Ascending aorta (tissue), 2 donors: ENCODE measurements at regions of chr7 and their contacts with region 1.

Region 1: DNA sequence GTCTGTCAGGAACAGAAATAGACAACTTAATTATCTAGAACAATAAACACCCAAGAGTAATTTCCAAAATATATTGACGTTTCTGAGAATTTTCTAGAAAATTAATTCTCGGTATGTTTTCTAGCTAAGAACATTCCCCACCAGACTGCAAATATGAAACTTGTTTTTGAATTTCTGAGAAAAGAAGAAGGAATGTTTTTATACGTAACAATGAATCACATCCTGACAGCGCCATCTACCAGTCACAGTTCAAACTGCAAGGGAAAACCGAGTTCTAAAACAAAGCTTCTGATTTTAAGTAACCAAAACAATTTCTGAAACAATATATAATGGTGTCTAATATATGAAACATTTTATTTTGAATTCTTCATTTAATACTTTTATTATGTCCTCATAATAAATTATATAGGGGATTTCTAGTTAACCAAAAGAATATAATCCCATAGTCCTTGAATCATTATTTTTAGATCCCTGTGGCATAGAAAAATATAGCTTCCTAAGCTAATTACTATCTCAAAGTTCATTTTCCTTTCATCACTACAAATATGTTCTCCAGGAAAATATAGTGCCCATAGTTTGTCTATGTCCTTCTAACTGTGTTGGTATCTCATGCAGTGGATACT is 34.5 kb upstream of the MEOX2 start:
- DNase-seq: peak in 1 of 2 donors; percentile 74
- H3K4me3 ChIP-seq: no peak overlapping the region
- H3K27ac ChIP-seq: peak overlapping the region; percentile 23 to 27
- H3K4me1 ChIP-seq: no peaks in the 10 kb centered on the region
- H3K27me3 ChIP-seq: no peaks in the 10 kb centered on the region
- CTCF ChIP-seq: peak; percentile 43 to 65 (median 55)

Region 2: DNA sequence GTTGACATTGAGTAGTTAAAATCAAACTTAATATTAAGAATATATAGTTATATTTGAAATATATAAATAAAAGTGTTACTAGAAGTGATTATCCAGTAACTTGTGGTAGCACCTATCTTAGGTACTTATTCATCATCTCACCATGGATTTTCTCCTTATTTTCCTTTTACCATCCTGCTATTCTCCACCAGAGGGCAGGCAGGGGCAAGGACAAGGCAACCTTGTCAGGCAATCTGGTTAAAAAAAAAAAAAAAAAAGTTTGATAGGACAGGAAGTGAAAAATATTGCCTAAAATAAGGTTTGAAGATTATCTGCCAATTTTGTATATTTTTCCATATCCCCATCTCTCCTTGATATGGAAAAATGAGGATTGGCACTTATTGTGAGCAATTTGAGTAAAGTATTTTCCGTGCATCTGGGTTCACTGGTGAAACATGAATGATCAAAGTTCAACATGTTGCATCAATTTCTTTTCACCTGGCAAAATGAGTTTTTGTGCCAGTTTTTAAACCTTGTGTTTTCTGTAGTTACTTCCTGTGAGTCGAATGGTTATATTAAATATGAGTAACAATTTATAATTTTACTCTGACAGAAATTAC is 415.9 kb before region 1 on chr7:
- intact Hi-C with region 1: loop called (anchors 2 kb)
- DNase-seq: no peak
- H3K4me3 ChIP-seq: no peak overlapping the region
- H3K27ac ChIP-seq: no peak overlapping the region
- H3K4me1 ChIP-seq: no peaks in the 10 kb centered on the region
- H3K27me3 ChIP-seq: no peaks in the 10 kb centered on the region
- CTCF ChIP-seq: peak in 2 of 3 experiments; percentile 51 to 67

Region 3: DNA sequence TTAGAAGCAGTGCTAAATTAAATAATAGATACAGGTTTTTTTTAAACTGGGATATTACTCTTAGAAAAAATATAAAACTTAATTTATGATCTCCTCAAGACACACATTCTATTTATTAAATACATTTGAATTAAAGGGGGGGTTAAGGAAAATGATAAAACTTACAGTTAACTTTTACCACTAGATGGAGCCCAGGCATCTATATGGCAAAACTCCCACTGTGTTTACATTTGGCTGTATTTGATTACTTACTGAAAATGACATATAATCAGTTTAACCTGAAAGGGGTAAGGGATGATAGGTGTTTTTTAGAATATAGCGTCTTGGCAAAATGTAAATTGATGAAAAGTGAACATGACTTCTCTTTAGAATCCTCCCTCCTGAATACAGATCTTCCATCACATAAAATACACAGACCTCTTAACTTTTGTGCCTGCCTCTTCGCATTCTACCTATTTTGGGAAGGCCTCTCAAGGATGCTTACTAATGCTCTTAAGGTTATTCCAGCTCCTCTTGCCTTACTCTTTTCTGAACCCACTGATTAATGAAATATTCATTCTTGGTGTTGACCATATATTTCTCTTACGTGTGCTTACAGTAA is 394.8 kb before region 1 on chr7:
- intact Hi-C with region 1: loop called (anchors 1 kb)
- DNase-seq: no peak
- H3K4me3 ChIP-seq: no peak overlapping the region
- H3K27ac ChIP-seq: no peak overlapping the region
- H3K4me1 ChIP-seq: no peaks in the 10 kb centered on the region
- H3K27me3 ChIP-seq: no peaks in the 10 kb centered on the region
- CTCF ChIP-seq: peak in 2 of 3 experiments; percentile 21 to 38

Region 4: GRCh38 chr7:15780271-15780670 is 59.3 kb after region 1 on chr7:
- intact Hi-C with region 1: no loop called
- DNase-seq: no peak
- H3K4me3 ChIP-seq: no peak overlapping the region
- H3K27ac ChIP-seq: no peak overlapping the region
- H3K4me1 ChIP-seq: no peaks in the 10 kb centered on the region
- H3K27me3 ChIP-seq: no peaks in the 10 kb centered on the region
- CTCF ChIP-seq: no peak

Region 5: GRCh38 chr7:15802425-15802824 is 81.5 kb after region 1 on chr7:
- intact Hi-C with region 1: no loop called
- DNase-seq: no peak
- H3K4me3 ChIP-seq: no peak overlapping the region
- H3K27ac ChIP-seq: peak overlapping the region; percentile 12
- H3K4me1 ChIP-seq: peaks cover 0 to 3% of the 10 kb centered on the region in 2 donors
- H3K27me3 ChIP-seq: no peaks in the 10 kb centered on the region
- CTCF ChIP-seq: no peak